IMR-90 (cell line): ENCODE measurements at regions of chr1 and their contacts with region 1.

Region 1: DNA sequence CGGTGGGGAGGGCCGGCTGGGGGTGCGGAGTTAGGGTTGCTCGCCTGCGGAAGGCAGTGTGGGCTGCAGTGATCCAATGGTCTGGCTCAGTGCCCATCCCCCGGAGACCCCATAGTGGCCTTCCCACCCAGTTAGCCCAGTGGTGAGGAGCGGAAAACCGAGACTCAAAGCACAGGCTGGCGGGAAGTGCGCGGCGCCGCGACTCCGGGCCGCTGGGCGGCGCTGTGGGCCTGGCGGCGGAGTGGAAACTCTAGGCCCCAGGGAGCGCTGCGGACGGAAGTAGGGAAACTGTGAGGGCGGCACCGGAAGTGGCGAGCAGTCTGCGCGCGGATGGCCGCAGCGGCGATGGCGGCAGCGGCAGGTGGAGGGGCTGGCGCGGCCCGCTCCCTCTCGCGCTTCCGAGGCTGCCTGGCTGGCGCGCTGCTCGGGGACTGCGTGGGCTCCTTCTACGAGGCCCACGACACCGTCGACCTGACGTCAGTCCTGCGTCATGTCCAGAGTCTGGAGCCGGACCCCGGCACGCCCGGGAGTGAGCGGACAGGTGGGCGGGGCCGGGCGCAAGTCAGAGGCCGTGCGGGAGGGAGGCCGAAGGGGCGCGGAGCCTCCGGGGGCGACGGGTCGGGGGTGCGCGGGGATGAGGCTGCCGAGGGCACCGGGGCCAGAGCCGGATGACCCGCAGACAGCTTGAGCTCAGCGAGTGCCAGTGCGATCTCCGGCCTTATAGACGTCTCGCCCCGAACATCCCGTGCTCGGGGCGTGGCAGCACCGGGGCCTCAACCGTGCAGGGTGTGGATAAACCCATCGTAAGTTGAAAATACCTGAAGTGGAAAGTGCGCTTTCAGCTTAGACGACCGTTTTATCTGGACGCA is at the start of gene ADPRS:
- DNase-seq: peak; percentile 89
- ATAC-seq: peak; percentile 91
- H3K4me3 ChIP-seq: peak within 1 kb of the TSS; percentile 75
- H3K27ac ChIP-seq: peak within 1 kb of the TSS; percentile 74
- H3K4me1 ChIP-seq: peaks cover 2% of the 10 kb centered on the region; the same call in 1 of the 2 replicates
- H3K27me3 ChIP-seq: no peaks in the 10 kb centered on the region
- CTCF ChIP-seq: peak; percentile 97
- POLR2A ChIP-seq: peak; percentile 85
- RAD21 ChIP-seq: peak; percentile 42
- total RNA-seq, gene ADPRS: 27.2 and 31.0 TPM in 2 replicates

Region 2: GRCh38 chr1:35882945-35883634 is 205.7 kb before region 1 on chr1 and contains the start of gene AGO1:
- CTCF ChIA-PET with region 1: no interaction called
- POLR2A ChIA-PET with region 1: no interaction called
- dilution Hi-C with region 1: no loop called
- in situ Hi-C with region 1: no loop called
- intact Hi-C with region 1: loop called (anchors 1 kb)
- DNase-seq: peak; percentile 89
- ATAC-seq: peak; percentile 94
- H3K4me3 ChIP-seq: peak within 1 kb of the TSS; percentile 96
- H3K27ac ChIP-seq: peak within 1 kb of the TSS; percentile 30
- H3K4me1 ChIP-seq: peaks cover 14% of the 10 kb centered on the region
- H3K27me3 ChIP-seq: no peaks in the 10 kb centered on the region; the same call in 1 of the 2 replicates
- CTCF ChIP-seq: peak; percentile 95
- POLR2A ChIP-seq: no peak
- RAD21 ChIP-seq: peak; percentile 40
- total RNA-seq, gene AGO1: 17.2 and 21.5 TPM in 2 replicates

Region 3: GRCh38 chr1:35930593-35931445 is 158.0 kb before region 1 on chr1 and contains the start of gene AGO3:
- CTCF ChIA-PET with region 1: no interaction called
- POLR2A ChIA-PET with region 1: no interaction called
- dilution Hi-C with region 1: no loop called
- in situ Hi-C with region 1: no loop called
- intact Hi-C with region 1: loop called (anchors 10 kb)
- DNase-seq: peak; percentile 77
- ATAC-seq: peak; percentile 92
- H3K4me3 ChIP-seq: peak within 1 kb of the TSS; percentile 92
- H3K27ac ChIP-seq: peak within 1 kb of the TSS; percentile 88
- H3K4me1 ChIP-seq: peaks cover 3% of the 10 kb centered on the region
- H3K27me3 ChIP-seq: no peaks in the 10 kb centered on the region
- CTCF ChIP-seq: no peak
- POLR2A ChIP-seq: peak; percentile 88
- RAD21 ChIP-seq: no peak
- total RNA-seq, gene AGO3: 18.1 and 25.6 TPM in 2 replicates